HEK293T (cell line): ENCODE measurements at regions of chr17 and their contacts with region 1.

Region 1: DNA sequence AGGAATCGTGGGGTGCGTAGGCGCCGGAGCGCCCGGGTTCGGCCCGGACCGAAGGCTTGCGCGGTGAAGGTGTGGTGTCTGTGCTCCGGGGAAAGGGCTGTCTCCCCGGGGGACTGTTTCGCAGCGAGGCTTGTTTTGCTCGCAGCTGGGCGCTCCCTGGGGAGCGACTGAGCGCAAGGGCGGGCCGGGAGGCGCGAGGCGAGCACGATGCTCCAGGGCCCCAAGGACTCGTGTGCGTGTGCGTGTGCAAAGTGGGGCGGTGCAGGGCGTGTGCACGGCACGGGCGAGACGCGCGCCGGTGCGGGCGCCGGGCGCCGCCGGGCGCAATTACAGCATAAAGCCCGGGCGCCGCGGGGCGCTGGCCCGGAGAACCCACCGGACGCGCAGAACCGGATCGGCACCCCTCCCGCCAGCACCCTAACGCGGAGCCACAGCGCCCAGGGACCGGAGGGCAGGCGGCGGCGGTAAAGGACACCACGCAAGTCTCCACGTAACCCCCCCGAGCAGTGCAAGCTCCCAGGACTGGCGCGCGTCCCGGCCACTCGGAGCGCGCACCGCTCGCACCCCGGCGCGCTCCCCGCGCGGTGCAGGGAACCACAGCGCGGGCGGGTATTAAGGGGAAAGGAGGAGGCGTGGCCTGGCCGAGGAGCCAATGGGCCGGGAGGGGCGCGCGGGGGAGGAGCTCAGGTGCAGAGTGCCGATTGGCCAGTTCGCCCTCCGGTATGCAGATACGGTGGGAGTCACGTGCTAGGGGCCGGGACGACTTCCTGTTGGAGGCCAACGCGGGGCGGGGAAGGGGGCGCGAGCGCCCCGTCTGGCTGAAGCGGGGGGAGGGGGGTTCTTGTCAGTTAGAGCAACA is at the start of gene TNRC6C:
- DNase-seq: peak; percentile 99

Region 2: GRCh38 chr17:77892469-77893143 is 65.5 kb before region 1 on chr17:
- CTCF ChIA-PET with region 1: no interaction called
- POLR2A ChIA-PET with region 1: interaction called, 16 read pairs
- DNase-seq: peak; percentile 69

Region 3: DNA sequence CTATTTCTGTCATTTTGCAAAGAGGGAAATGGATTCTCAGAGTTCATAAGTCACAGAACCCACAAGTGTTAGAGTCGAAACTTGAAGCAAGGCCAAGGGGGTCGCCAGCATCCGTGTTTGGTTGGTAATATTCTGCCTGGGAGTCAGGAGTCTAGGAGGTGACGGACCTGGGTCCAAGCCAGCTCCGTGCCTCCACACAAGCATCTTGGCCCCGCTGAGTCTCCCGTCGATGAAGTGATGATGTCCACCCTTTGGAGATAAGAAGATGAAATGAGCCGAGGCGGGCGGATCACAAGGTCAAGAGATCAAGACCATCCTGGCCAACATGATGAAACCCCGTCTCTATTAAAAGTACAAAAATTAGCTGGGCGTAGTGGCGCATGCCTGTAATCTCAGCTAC is 52.8 kb before region 1 on chr17:
- CTCF ChIA-PET with region 1: no interaction called
- POLR2A ChIA-PET with region 1: interaction called, 10 read pairs
- DNase-seq: no peak

Region 4: GRCh38 chr17:77927777-77928518 is 30.1 kb before region 1 on chr17:
- CTCF ChIA-PET with region 1: no interaction called
- POLR2A ChIA-PET with region 1: interaction called, 23 read pairs
- DNase-seq: no peak

Region 5: DNA sequence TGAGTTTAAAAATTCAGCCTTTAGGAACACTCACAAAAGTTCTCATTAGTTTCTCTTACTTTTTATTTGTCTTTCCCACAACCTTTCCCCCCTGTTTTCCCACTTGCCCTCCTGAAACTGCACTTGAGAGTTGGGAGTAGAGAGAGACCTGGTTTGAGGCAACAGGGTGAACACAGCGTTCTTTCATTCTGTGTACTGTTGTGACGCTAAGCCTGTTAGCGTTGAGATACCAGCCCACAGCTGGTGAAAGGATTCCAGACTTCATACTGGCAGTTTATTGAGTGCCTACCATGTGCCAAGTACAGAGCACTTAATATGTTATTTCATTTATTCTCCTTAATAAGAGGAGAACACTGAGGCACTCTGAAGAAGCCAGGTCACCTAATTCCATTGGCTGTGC is 10.7 kb after region 1 on chr17:
- CTCF ChIA-PET with region 1: interaction called, 3 read pairs
- POLR2A ChIA-PET with region 1: interaction called, 11 read pairs
- DNase-seq: no peak

Region 6: GRCh38 chr17:78013683-78014467 is 55.8 kb after region 1 on chr17:
- CTCF ChIA-PET with region 1: interaction called, 3 read pairs
- POLR2A ChIA-PET with region 1: interaction called, 15 read pairs
- DNase-seq: peak; percentile 52